Naive thymus-derived CD4-positive, alpha-beta T cell (primary cell): ENCODE measurements at regions of chr1 and their contacts with region 1.

Region 1: GRCh38 chr1:161071886-161072371 is 2.2 kb upstream of the ARHGAP30 start:
- DNase-seq: peak; percentile 18 to 50 (median 43)
- ATAC-seq: no peak
- H3K4me3 ChIP-seq: no peak overlapping the region
- H3K4me3 Mint-ChIP-seq: peak overlapping the region in 4 of 10 donors; percentile 11 to 46 (median 19)
- H3K27ac ChIP-seq: no peak overlapping the region
- H3K27ac Mint-ChIP-seq: peak overlapping the region; percentile 27 to 99 (median 91)
- H3K4me1 ChIP-seq: peaks cover 19 to 31% of the 10 kb centered on the region in 2 donors
- H3K4me1 Mint-ChIP-seq: peaks cover 21 to 47% (median 42%) of the 10 kb centered on the region in 7 donors
- H3K27me3 ChIP-seq: no peaks in the 10 kb centered on the region
- H3K27me3 Mint-ChIP-seq: no peaks in the 10 kb centered on the region

Region 2: GRCh38 chr1:161013488-161014230 is 58.3 kb before region 1 on chr1:
- CTCF ChIA-PET with region 1: no interaction called
- POLR2A ChIA-PET with region 1: interaction called, 16 read pairs
- intact Hi-C with region 1: no loop called
- DNase-seq: peak; percentile 23 to 63 (median 57)
- ATAC-seq: peak; percentile 88
- H3K4me3 ChIP-seq: peak overlapping the region; percentile 57
- H3K4me3 Mint-ChIP-seq: peak overlapping the region; percentile 74 to 97 (median 84)
- H3K27ac ChIP-seq: peak overlapping the region; percentile 73
- H3K27ac Mint-ChIP-seq: peak overlapping the region; percentile 91 to 98 (median 96)
- H3K4me1 ChIP-seq: peaks cover 10 to 29% of the 10 kb centered on the region in 2 donors
- H3K4me1 Mint-ChIP-seq: peaks cover 23 to 49% (median 40%) of the 10 kb centered on the region in 7 donors
- H3K27me3 ChIP-seq: no peaks in the 10 kb centered on the region
- H3K27me3 Mint-ChIP-seq: no peaks in the 10 kb centered on the region

Region 3: GRCh38 chr1:161038523-161039153 is 33.3 kb before region 1 on chr1 and contains the start of gene TSTD1:
- CTCF ChIA-PET with region 1: interaction called, 40 read pairs
- POLR2A ChIA-PET with region 1: interaction called, 377 read pairs
- intact Hi-C with region 1: loop called (anchors 1 kb)
- DNase-seq: peak; percentile 70 to 90 (median 88)
- ATAC-seq: peak; percentile 95
- H3K4me3 ChIP-seq: peak within 1 kb of the TSS; percentile 95
- H3K4me3 Mint-ChIP-seq: peak within 1 kb of the TSS; percentile 88 to 94 (median 92)
- H3K27ac ChIP-seq: peak within 1 kb of the TSS; percentile 93
- H3K27ac Mint-ChIP-seq: peak within 1 kb of the TSS; percentile 91 to 97 (median 94)
- H3K4me1 ChIP-seq: peaks cover 16 to 32% of the 10 kb centered on the region in 2 donors
- H3K4me1 Mint-ChIP-seq: peaks cover 25 to 57% (median 37%) of the 10 kb centered on the region in 7 donors
- H3K27me3 ChIP-seq: no peaks in the 10 kb centered on the region
- H3K27me3 Mint-ChIP-seq: no peaks in the 10 kb centered on the region
- total RNA-seq, gene TSTD1: 49.8 to 84.0 (median 58.2) TPM

Region 4: GRCh38 chr1:161054805-161055204 is 17.1 kb before region 1 on chr1:
- CTCF ChIA-PET with region 1: interaction called, 6 read pairs
- POLR2A ChIA-PET with region 1: interaction called, 377 read pairs
- intact Hi-C with region 1: loop called in 1 of 2 experiments (anchors 1 kb)
- DNase-seq: no peak
- ATAC-seq: no peak
- H3K4me3 ChIP-seq: no peak overlapping the region
- H3K4me3 Mint-ChIP-seq: no peak overlapping the region
- H3K27ac ChIP-seq: peak overlapping the region; percentile 19
- H3K27ac Mint-ChIP-seq: peak overlapping the region in 3 of 9 donors; percentile 25 to 39 (median 26)
- H3K4me1 ChIP-seq: peaks cover 5 to 8% of the 10 kb centered on the region in 2 donors
- H3K4me1 Mint-ChIP-seq: peaks cover 20 to 40% (median 36%) of the 10 kb centered on the region in 7 donors
- H3K27me3 ChIP-seq: no peaks in the 10 kb centered on the region
- H3K27me3 Mint-ChIP-seq: no peaks in the 10 kb centered on the region

Region 5: DNA sequence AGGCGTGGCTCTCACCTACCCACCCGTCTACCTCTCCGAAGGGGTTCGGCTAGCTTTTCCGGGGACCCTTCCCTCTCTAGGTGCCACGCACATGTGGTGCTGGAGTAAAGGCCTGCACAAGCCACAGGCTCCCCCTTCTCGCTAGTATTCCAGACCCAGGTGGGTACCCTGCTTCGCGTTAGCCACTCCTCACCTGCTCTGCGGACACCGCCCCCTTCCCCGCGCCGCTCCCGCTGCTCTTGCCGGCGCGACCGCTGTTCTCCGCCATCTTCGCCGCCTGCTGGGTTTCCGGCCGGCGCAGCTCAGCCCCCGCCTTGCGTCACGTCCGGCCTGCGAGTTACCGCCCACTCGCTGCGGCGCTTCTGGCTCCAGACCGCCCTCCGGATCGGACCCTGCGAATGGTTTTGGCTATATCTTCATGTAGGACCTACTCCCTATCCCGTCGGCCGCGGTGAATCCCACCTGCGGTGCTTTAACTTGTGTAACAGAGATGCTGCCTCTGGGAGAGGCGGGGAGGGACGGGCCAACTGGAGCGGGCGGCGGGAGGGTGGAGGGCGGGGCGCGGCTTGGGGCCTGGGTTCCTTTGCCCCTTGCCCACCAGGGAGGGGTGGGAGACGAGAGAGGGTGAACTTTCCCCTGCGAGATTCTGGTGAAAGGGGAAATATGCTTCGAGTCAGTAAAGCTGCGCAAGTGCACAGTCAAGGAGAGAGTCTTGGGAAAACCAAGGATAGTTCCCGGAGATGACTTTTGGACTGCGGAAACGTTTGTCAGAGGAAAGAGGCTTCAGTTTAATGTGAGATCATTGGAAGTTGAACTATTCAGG is 46.0 kb after region 1 on chr1 and contains the starts of genes NIT1 and PFDN2:
- CTCF ChIA-PET with region 1: no interaction called
- POLR2A ChIA-PET with region 1: interaction called, 24 read pairs
- intact Hi-C with region 1: loop called (anchors 1 kb)
- DNase-seq: peak; percentile 76 to 90 (median 85)
- ATAC-seq: peak; percentile 86
- H3K4me3 ChIP-seq: peak within 1 kb of the TSS; percentile 99
- H3K4me3 Mint-ChIP-seq: peak within 1 kb of the TSS; percentile 92 to 99 (median 95)
- H3K27ac ChIP-seq: peak within 1 kb of the TSS; percentile 92
- H3K27ac Mint-ChIP-seq: peak within 1 kb of the TSS; percentile 57 to 99 (median 93)
- H3K4me1 ChIP-seq: peaks cover 31 to 35% of the 10 kb centered on the region in 2 donors
- H3K4me1 Mint-ChIP-seq: peaks cover 44 to 82% (median 78%) of the 10 kb centered on the region in 7 donors
- H3K27me3 ChIP-seq: no peaks in the 10 kb centered on the region
- H3K27me3 Mint-ChIP-seq: no peaks in the 10 kb centered on the region
- total RNA-seq, gene NIT1: 23.3 to 49.6 (median 41.8) TPM
- total RNA-seq, gene PFDN2: 32.0 to 67.9 (median 34.0) TPM

Region 6: GRCh38 chr1:161153679-161154426 is 81.9 kb after region 1 on chr1 and contains the start of gene UFC1:
- CTCF ChIA-PET with region 1: no interaction called
- POLR2A ChIA-PET with region 1: interaction called, 21 read pairs
- intact Hi-C with region 1: loop called (anchors 1 kb)
- DNase-seq: peak; percentile 72 to 92 (median 87)
- ATAC-seq: peak; percentile 94
- H3K4me3 ChIP-seq: peak within 1 kb of the TSS; percentile 86
- H3K4me3 Mint-ChIP-seq: peak within 1 kb of the TSS; percentile 93 to 100 (median 100)
- H3K27ac ChIP-seq: peak within 1 kb of the TSS; percentile 88
- H3K27ac Mint-ChIP-seq: peak within 1 kb of the TSS; percentile 100
- H3K4me1 ChIP-seq: peaks cover 13 to 20% of the 10 kb centered on the region in 2 donors
- H3K4me1 Mint-ChIP-seq: peaks cover 7 to 39% (median 35%) of the 10 kb centered on the region in 7 donors
- H3K27me3 ChIP-seq: no peaks in the 10 kb centered on the region
- H3K27me3 Mint-ChIP-seq: no peaks in the 10 kb centered on the region
- total RNA-seq, gene UFC1: 83.7 to 116 (median 98.9) TPM